ENCODE measurements at regions of chr18 and their contacts with region 1.

Region 1: GRCh38 chr18:887716-888115 is 17.0 kb upstream of the ADCYAP1 start:
- DNase-seq: no peak
- ATAC-seq: no peak
- H3K4me3 ChIP-seq: no peak overlapping the region
- H3K27ac ChIP-seq: no peak overlapping the region
- H3K4me1 ChIP-seq: no peaks in the 10 kb centered on the region
- H3K27me3 ChIP-seq: no peaks in the 10 kb centered on the region
- CTCF ChIP-seq: no peak

Region 2: DNA sequence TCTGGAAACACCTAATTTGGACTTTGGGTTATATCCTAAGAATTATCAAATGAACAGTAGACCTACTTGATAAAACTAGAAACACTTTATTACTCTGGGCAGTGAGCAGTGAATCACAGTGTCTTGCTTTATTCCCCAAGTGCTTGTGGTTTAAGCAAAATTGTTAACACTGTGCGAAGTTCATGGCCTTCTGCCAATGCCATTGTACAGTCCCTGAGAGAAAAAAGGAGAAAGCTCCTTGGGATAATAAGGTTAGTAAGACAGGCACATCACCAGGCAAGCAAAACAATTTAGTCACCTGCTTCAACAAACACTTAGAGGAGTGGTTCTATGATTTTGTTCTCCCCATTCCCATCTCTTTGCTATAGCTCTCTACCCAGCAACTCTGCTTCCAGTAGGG is 56.7 kb after region 1 on chr18:
- intact Hi-C with region 1: loop called (anchors 10 kb)
- DNase-seq: no peak
- ATAC-seq: no peak
- H3K4me3 ChIP-seq: no peak overlapping the region
- H3K27ac ChIP-seq: no peak overlapping the region
- H3K4me1 ChIP-seq: no peaks in the 10 kb centered on the region
- H3K27me3 ChIP-seq: no peaks in the 10 kb centered on the region
- CTCF ChIP-seq: no peak

Region 3: GRCh38 chr18:1092228-1092627 is 204.5 kb after region 1 on chr18:
- intact Hi-C with region 1: no loop called
- DNase-seq: no peak
- ATAC-seq: no peak
- H3K4me3 ChIP-seq: no peak overlapping the region
- H3K27ac ChIP-seq: no peak overlapping the region
- H3K4me1 ChIP-seq: no peaks in the 10 kb centered on the region
- H3K27me3 ChIP-seq: no peaks in the 10 kb centered on the region
- CTCF ChIP-seq: no peak